ENCODE measurements at regions of chr5 and their contacts with region 1.

Region 1: DNA sequence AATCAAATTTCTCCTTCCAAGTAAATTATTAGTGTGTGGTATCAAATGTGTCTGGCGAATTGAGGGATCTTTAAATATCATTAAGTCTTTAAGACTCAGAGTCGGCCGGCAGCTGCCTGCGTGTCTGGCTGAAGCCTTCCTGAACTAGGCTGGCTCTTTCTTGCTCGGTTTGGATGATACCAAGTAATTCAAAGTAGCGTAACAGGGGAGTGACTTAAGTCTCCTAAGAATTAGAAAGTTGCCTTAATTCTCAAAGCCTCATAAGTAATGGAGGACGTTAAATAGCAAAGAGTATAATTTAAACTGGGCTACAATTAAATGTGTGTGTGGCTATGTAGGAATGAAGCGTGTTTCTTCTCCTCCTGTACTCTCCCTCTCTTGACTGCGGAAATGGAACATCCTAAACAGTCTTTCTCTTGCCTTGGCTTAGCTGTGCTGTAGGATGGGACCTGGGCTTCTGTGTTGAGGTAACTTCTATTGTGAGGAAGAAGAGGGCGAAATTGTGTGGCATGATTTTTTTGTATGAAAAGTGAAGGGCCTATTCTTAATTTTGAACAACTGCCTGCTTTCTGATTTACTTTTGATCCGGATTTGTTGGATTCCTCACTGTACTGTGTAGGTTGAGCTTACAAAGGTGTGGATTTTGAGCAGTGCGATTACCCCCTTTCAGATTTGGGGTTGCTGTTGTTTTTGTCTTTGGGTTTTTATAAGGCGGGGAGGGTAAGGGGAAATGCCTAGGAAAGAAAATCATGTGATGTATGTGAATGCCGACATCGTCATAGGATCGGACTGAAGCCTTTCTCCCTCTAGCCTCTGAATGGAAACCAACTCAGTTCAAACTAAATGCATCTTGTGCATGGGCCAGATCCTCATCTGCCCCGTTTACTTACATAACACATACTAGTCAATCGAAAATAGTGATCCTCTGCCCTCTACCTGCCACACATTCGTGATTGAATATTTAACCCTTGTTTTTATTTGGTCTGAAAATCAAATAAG is 29.9 kb downstream of the CPEB4 start:
- DNase-seq: peak; percentile 87
- ATAC-seq: peak; percentile 75
- H3K4me3 ChIP-seq: peak overlapping the region; percentile 74
- H3K27ac ChIP-seq: peak overlapping the region; percentile 91
- H3K4me1 ChIP-seq: peaks cover 34% of the 10 kb centered on the region
- H3K27me3 ChIP-seq: no peaks in the 10 kb centered on the region
- CTCF ChIP-seq: peak; percentile 32; the same call in 1 of the 2 replicates

Region 2: GRCh38 chr5:173615884-173616576 is 302.1 kb before region 1 on chr5:
- CTCF ChIA-PET with region 1: no interaction called
- POLR2A ChIA-PET with region 1: no interaction called
- intact Hi-C with region 1: loop called (anchors 2 kb)
- DNase-seq: peak; percentile 79
- ATAC-seq: peak; percentile 62
- H3K4me3 ChIP-seq: peak overlapping the region; percentile 90
- H3K27ac ChIP-seq: peak overlapping the region; percentile 71
- H3K4me1 ChIP-seq: peaks cover 36% of the 10 kb centered on the region
- H3K27me3 ChIP-seq: no peaks in the 10 kb centered on the region
- CTCF ChIP-seq: peak; percentile 81

Region 3: GRCh38 chr5:173902743-173903142 is 15.3 kb before region 1 on chr5:
- CTCF ChIA-PET with region 1: no interaction called
- POLR2A ChIA-PET with region 1: no interaction called
- intact Hi-C with region 1: loop called (anchors 1 kb)
- DNase-seq: peak; percentile 59
- ATAC-seq: peak; percentile 88
- H3K4me3 ChIP-seq: no peak overlapping the region
- H3K27ac ChIP-seq: peak overlapping the region; percentile 72
- H3K4me1 ChIP-seq: peaks cover 28% of the 10 kb centered on the region
- H3K27me3 ChIP-seq: no peaks in the 10 kb centered on the region
- CTCF ChIP-seq: no peak

Region 4: GRCh38 chr5:173954671-173955521 is 36.8 kb after region 1 on chr5:
- CTCF ChIA-PET with region 1: no interaction called
- POLR2A ChIA-PET with region 1: interaction called, 3 read pairs
- intact Hi-C with region 1: loop called (anchors 1 kb)
- DNase-seq: peak; percentile 50
- ATAC-seq: peak; percentile 53
- H3K4me3 ChIP-seq: no peak overlapping the region
- H3K27ac ChIP-seq: peak overlapping the region; percentile 71
- H3K4me1 ChIP-seq: peaks cover 33% of the 10 kb centered on the region
- H3K27me3 ChIP-seq: no peaks in the 10 kb centered on the region
- CTCF ChIP-seq: no peak

Region 5: GRCh38 chr5:173972925-173973615 is 55.0 kb after region 1 on chr5:
- CTCF ChIA-PET with region 1: no interaction called
- POLR2A ChIA-PET with region 1: interaction called, 3 read pairs
- intact Hi-C with region 1: loop called (anchors 1 kb)
- DNase-seq: peak; percentile 95
- ATAC-seq: peak; percentile 44
- H3K4me3 ChIP-seq: peak overlapping the region; percentile 68
- H3K27ac ChIP-seq: peak overlapping the region; percentile 7; the same call in 1 of the 2 replicates
- H3K4me1 ChIP-seq: peaks cover 36% of the 10 kb centered on the region
- H3K27me3 ChIP-seq: no peaks in the 10 kb centered on the region
- CTCF ChIP-seq: peak; percentile 92

Measured in PC-3 (cell line).